ENCODE measurements at regions of chr18 and their contacts with region 1.

Region 1: GRCh38 chr18:63439334-63439733 is 17.1 kb upstream of the VPS4B start:
- DNase-seq: peak; percentile 39 to 66
- H3K4me3 ChIP-seq: no peak overlapping the region
- H3K27ac ChIP-seq: no peak overlapping the region
- H3K4me1 ChIP-seq: no peaks in the 10 kb centered on the region
- H3K27me3 ChIP-seq: no peaks in the 10 kb centered on the region
- CTCF ChIP-seq: peak; percentile 70 to 87 (median 81)
- POLR2A ChIP-seq: no peak

Region 2: GRCh38 chr18:63119647-63120046 is 319.7 kb before region 1 on chr18:
- intact Hi-C with region 1: loop called (anchors 10 kb)
- DNase-seq: no peak
- H3K4me3 ChIP-seq: no peak overlapping the region
- H3K27ac ChIP-seq: no peak overlapping the region
- H3K4me1 ChIP-seq: no peaks in the 10 kb centered on the region
- H3K27me3 ChIP-seq: no peaks in the 10 kb centered on the region
- CTCF ChIP-seq: peak; percentile 16 to 39 (median 30)
- POLR2A ChIP-seq: no peak

Region 3: DNA sequence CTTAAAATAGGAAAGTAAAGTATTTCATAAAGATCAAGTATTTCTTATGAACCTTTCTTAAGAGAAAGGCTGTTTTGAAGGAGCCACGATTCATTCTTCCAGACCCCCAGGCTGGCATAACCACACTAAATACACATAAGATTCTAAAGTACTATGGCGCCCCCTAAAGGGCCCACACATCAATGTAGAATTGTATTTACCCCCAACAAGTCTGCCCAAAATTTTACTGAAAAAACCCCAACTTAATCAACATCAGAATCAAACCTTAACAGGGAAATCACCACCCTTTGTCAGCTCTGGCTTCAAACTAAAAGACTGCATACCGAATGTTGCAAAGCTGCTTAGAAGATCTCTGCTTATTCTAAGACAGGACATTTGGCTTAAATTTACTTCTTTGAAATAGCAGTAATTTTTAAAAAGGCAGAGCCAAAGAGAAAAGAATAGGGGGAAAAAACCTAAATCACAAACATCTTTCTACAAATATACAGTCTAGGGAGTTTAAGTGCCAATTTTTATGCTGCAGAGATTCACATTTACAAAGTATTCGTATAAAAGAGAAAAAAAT is 99.3 kb before region 1 on chr18:
- intact Hi-C with region 1: loop called (anchors 10 kb)
- DNase-seq: peak in 1 of 2 donors; percentile 40
- H3K4me3 ChIP-seq: no peak overlapping the region
- H3K27ac ChIP-seq: no peak overlapping the region
- H3K4me1 ChIP-seq: peaks cover 0 to 3% of the 10 kb centered on the region in 2 donors
- H3K27me3 ChIP-seq: no peaks in the 10 kb centered on the region
- CTCF ChIP-seq: peak; percentile 28 to 46 (median 40)
- POLR2A ChIP-seq: no peak

Region 4: DNA sequence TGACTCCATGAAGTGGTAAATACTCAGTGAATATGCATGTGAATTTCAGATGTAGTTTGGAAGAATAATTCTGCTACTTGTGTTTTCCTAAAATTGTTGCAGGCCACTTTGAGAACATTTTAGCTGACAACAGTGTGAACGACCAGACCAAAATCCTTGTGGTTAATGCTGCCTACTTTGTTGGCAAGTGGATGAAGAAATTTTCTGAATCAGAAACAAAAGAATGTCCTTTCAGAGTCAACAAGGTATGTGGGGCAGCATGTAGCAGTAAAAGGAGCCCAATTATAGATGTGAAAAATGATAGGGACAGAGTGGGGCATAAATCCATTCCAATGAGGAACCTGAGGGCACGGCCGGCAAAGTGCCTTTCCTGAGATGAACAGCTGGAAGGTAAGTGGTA is 53.5 kb after region 1 on chr18:
- intact Hi-C with region 1: no loop called
- DNase-seq: no peak
- H3K4me3 ChIP-seq: no peak overlapping the region
- H3K27ac ChIP-seq: no peak overlapping the region
- H3K4me1 ChIP-seq: peaks cover 0 to 3% of the 10 kb centered on the region in 2 donors
- H3K27me3 ChIP-seq: no peaks in the 10 kb centered on the region
- CTCF ChIP-seq: no peak
- POLR2A ChIP-seq: no peak

Region 5: DNA sequence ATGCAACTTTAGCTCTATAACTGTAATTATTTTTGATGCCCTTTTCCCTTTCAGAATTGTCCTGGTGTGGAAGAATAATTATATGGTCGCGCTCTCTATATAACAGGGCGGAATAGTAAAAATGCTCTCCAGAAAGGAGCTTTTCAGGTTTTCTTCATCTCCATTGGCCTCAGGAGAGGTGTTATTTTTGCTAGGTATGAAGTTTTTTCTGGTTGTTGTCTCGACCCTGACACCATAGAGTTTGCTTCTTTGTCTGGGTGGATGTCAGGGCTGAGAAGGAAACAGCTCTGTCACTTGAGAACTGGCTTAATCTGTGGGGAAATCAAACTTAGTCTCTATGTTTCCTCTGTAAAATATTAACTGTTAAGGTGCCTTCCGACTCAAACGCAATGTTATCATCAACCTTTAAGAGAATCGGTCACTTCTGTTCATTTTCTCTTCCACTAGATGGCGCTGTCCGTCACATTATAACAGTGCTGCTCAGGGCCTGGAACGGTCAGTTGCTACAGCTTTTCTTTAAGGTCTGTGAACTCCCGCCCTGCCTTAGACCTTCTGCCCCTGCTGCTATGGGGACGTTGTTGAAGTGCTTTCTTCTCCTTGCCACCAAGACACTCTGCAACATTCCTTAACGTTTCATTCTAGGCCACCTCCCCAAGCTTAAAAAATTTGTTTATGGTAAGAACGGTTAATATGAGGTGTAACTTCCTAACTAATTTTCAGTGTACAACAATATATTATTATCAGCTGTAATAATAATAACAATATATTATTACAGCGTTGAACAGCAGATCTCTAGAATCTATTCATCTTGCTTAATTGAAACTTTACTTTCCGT is 79.1 kb after region 1 on chr18:
- intact Hi-C with region 1: no loop called
- DNase-seq: peak; percentile 27 to 69
- H3K4me3 ChIP-seq: no peak overlapping the region
- H3K27ac ChIP-seq: no peak overlapping the region
- H3K4me1 ChIP-seq: no peaks in the 10 kb centered on the region
- H3K27me3 ChIP-seq: no peaks in the 10 kb centered on the region
- CTCF ChIP-seq: peak; percentile 73 to 81 (median 78)
- POLR2A ChIP-seq: no peak